Activated CD8-positive, alpha-beta T cell treated with anti-CD3 and anti-CD28 coated beads, Interleukin-2, amount 10 ng/mL, durations not matched to agents 7 days and 5 days (primary cell): ENCODE measurements at regions of chr14 and their contacts with region 1.

Region 1: GRCh38 chr14:91510174-91511042 is at the start of gene PPP4R3A:
- DNase-seq: peak; percentile 95
- ATAC-seq: peak; percentile 87
- H3K4me3 Mint-ChIP-seq: peak within 1 kb of the TSS; percentile 100
- H3K27ac Mint-ChIP-seq: peak within 1 kb of the TSS; percentile 100
- H3K4me1 Mint-ChIP-seq: peaks cover 20% of the 10 kb centered on the region
- H3K27me3 Mint-ChIP-seq: peaks cover 3% of the 10 kb centered on the region
- total RNA-seq, gene PPP4R3A: 121 to 129 TPM

Region 2: GRCh38 chr14:92039719-92040430 is 529.5 kb after region 1 on chr14 and contains the start of gene TRIP11:
- CTCF ChIA-PET with region 1: no interaction called
- POLR2A ChIA-PET with region 1: interaction called, 14 read pairs
- DNase-seq: peak; percentile 98
- ATAC-seq: peak; percentile 95
- H3K4me3 Mint-ChIP-seq: peak within 1 kb of the TSS; percentile 96
- H3K27ac Mint-ChIP-seq: peak within 1 kb of the TSS; percentile 94
- H3K4me1 Mint-ChIP-seq: peaks cover 41% of the 10 kb centered on the region
- H3K27me3 Mint-ChIP-seq: no peaks in the 10 kb centered on the region
- total RNA-seq, gene TRIP11: 43.6 to 44.5 TPM